Activated B cell treated with CpG ODN at 0.5 μM for 24 hours (primary cell): ENCODE measurements at regions of chr20 and their contacts with region 1.

Region 1: GRCh38 chr20:49132995-49133478 is 55.1 kb downstream of the STAU1 start:
- DNase-seq: no peak
- ATAC-seq: no peak
- H3K4me3 Mint-ChIP-seq: no peak overlapping the region
- H3K27ac Mint-ChIP-seq: peak overlapping the region; percentile 30
- H3K4me1 Mint-ChIP-seq: peaks cover 2% of the 10 kb centered on the region
- H3K27me3 Mint-ChIP-seq: no peaks in the 10 kb centered on the region
- CTCF ChIP-seq: no peak

Region 2: GRCh38 chr20:49203746-49204145 is 70.7 kb after region 1 on chr20:
- CTCF ChIA-PET with region 1: no interaction called
- POLR2A ChIA-PET with region 1: no interaction called
- intact Hi-C with region 1: no loop called
- DNase-seq: no peak
- ATAC-seq: no peak
- H3K4me3 Mint-ChIP-seq: no peak overlapping the region
- H3K27ac Mint-ChIP-seq: no peak overlapping the region
- H3K4me1 Mint-ChIP-seq: no peaks in the 10 kb centered on the region
- H3K27me3 Mint-ChIP-seq: no peaks in the 10 kb centered on the region
- CTCF ChIP-seq: no peak

Region 3: DNA sequence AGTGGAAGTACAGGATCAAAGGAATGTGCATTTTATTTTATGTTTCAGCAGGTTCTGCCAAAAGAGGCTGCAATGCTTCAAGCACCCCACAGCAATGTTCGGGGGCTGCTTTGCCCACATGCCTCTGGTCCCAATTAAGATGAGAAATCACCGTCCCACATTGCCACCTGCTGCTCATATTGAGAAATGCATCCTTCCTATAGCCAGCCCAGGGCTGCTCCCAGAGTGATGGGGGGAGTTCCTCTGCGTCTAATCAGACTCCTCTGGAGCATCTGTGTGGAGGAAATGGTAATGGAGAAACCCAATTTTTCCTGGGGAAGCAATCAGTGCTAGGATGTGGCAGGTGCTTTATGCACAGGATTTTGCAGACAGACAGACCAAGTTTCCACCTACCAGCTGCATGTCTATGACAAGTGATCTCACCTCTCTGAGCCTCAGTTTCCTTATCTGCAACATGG is 401.2 kb after region 1 on chr20:
- CTCF ChIA-PET with region 1: no interaction called
- POLR2A ChIA-PET with region 1: no interaction called
- intact Hi-C with region 1: loop called (anchors 10 kb)
- DNase-seq: no peak
- ATAC-seq: peak; percentile 78
- H3K4me3 Mint-ChIP-seq: no peak overlapping the region
- H3K27ac Mint-ChIP-seq: no peak overlapping the region
- H3K4me1 Mint-ChIP-seq: peaks cover 2% of the 10 kb centered on the region
- H3K27me3 Mint-ChIP-seq: peaks cover 23% of the 10 kb centered on the region
- CTCF ChIP-seq: peak; percentile 60